BJ (cell line): ENCODE measurements at regions of chr13 and their contacts with region 1.

Region 1: DNA sequence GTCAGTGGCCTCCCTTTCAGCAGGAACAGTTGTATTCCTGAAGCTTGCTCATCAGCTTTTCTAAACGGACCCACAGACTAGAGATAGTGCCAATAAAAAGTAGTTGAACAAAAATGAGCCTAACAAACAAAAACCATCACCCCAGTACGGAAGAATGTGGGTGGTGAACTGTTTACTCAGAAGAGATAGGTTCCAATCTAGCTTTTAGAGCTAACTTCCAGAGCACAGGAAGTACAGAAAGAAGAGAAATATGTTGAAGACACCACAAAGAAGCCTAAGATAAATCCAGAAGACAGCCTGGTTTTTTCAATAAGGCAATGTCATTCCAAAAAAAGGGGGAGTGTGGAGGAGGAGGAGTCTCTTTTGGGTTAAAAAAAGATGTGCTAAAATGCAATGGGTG is 2.8 kb upstream of the LMO7 start:
- DNase-seq: peak; percentile 93
- H3K4me3 ChIP-seq: no peak overlapping the region
- H3K27me3 ChIP-seq: no peaks in the 10 kb centered on the region
- CTCF ChIP-seq: no peak

Region 2: DNA sequence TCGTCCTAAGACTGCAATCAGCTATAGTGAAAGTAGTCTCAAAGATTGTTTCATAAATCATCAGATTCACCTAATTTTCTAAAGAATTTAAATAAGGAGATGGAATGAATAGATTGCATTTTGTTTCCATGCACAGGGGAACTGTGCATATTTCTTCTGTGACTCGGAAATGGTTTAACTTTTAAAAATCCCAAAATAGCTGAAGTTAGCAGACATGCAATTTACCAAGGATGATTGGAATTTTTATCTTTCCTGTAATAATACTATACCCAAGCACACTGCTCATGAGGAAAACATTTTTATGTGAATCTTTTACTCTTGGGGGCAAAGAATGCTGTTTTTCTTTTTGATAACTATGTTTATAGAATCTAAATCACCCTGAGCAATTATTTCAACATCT is 12.1 kb before region 1 on chr13:
- CTCF ChIA-PET with region 1: interaction called, 3 read pairs
- POLR2A ChIA-PET with region 1: interaction called, 10 read pairs
- DNase-seq: peak; percentile 78
- H3K4me3 ChIP-seq: no peak overlapping the region
- H3K27me3 ChIP-seq: no peaks in the 10 kb centered on the region
- CTCF ChIP-seq: no peak